ENCODE measurements at regions of chr15 and their contacts with region 1.

Region 1: DNA sequence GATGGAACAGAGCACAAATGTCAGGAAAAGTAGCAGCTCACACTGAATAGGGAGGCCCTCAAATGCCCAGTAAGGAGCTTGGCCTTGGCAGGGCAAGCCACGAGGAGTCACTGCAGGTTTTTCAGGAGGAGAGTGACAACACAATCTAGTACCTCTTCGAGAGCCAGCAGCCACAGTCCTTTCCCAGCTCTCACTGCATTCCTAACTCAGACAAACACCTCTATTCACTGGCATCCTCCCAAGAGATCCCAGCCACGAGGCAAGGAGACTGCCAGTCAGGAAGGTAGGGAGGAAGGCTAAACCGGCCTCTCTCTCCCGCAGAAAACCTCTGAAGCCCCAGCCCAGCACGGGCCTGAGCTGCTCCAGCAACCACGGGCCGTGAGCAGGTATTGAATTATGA is 146.0 kb upstream of the SMAD3 start:
- DNase-seq: no peak
- H3K4me3 ChIP-seq: no peak overlapping the region
- H3K27ac ChIP-seq: no peak overlapping the region
- H3K4me1 ChIP-seq: no peaks in the 10 kb centered on the region
- H3K27me3 ChIP-seq: peaks cover 11 to 18% of the 10 kb centered on the region in 2 experiments
- CTCF ChIP-seq: no peak
- POLR2A ChIP-seq: no peak

Region 2: DNA sequence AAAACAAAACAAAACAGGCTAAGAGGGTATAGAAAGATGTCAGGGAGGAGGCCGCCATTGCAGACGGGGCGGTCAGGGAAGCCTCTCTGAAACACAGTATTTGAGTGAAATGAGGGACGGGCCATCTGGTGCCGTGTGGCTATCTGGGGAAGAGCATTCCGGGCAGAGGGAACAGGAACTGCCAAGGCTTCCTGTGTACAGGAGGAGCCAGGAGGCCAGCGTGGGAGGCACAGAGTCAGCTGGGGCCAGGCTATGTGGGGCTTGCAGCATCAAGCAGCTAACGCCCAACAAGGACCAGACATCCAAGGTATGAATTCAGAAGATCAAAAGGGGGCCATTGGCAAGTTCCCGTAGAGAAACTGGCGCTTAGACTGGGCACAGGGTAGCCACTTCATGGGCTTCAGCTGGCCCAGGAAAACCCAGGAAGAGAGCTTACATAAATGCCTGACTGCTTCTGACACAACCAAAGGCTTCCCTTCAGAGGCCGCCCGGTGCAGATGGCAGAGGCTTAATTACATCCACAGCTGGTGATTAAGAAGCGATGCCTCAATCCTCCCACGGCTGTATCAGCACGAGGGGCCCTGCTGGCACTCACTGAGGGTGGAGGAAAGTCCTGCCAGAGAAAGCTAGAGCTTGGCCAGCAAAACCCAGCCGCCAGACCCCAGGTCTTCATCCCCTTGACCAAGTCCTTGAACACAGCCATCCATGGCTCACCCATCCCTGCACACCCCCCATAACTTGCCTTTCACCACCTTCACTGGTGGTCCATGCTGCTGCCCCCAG is 810.7 kb before region 1 on chr15:
- CTCF ChIA-PET with region 1: no interaction called
- POLR2A ChIA-PET with region 1: no interaction called
- dilution Hi-C with region 1: no loop called
- intact Hi-C with region 1: no loop called
- DNase-seq: no peak
- H3K4me3 ChIP-seq: no peak overlapping the region
- H3K27ac ChIP-seq: no peak overlapping the region
- H3K4me1 ChIP-seq: no peaks in the 10 kb centered on the region
- H3K27me3 ChIP-seq: peaks cover 8 to 10% of the 10 kb centered on the region in 2 experiments
- CTCF ChIP-seq: no peak
- POLR2A ChIP-seq: no peak

Region 3: GRCh38 chr15:66841953-66842681 is 77.3 kb before region 1 on chr15:
- CTCF ChIA-PET with region 1: no interaction called
- POLR2A ChIA-PET with region 1: no interaction called
- dilution Hi-C with region 1: no loop called
- intact Hi-C with region 1: no loop called
- DNase-seq: peak; percentile 93
- H3K4me3 ChIP-seq: peak overlapping the region in 2 of 3 experiments; percentile 45 to 50
- H3K27ac ChIP-seq: peak overlapping the region; percentile 89
- H3K4me1 ChIP-seq: peaks cover 15% of the 10 kb centered on the region
- H3K27me3 ChIP-seq: no peaks in the 10 kb centered on the region
- CTCF ChIP-seq: no peak
- POLR2A ChIP-seq: no peak

Region 4: GRCh38 chr15:67816668-67817067 is 897.2 kb after region 1 on chr15:
- CTCF ChIA-PET with region 1: no interaction called
- POLR2A ChIA-PET with region 1: no interaction called
- dilution Hi-C with region 1: no loop called
- intact Hi-C with region 1: loop called (anchors 2 kb)
- DNase-seq: no peak
- H3K4me3 ChIP-seq: no peak overlapping the region
- H3K27ac ChIP-seq: no peak overlapping the region
- H3K4me1 ChIP-seq: no peaks in the 10 kb centered on the region
- H3K27me3 ChIP-seq: peaks cover 33 to 44% of the 10 kb centered on the region in 2 experiments
- CTCF ChIP-seq: no peak
- POLR2A ChIP-seq: no peak

Measured in endothelial cell of umbilical vein (primary cell).